ENCODE measurements at regions of chr6 and their contacts with region 1.

Region 1: GRCh38 chr6:50843842-50844241 is 25.2 kb downstream of the TFAP2B start:
- DNase-seq: no peak
- H3K4me3 Mint-ChIP-seq: no peak overlapping the region
- H3K27ac Mint-ChIP-seq: no peak overlapping the region
- H3K4me1 Mint-ChIP-seq: no peaks in the 10 kb centered on the region
- H3K27me3 Mint-ChIP-seq: peaks cover 80% of the 10 kb centered on the region

Region 2: GRCh38 chr6:49826743-49827406 is 1017.0 kb before region 1 on chr6:
- CTCF ChIA-PET with region 1: no interaction called
- intact Hi-C with region 1: no loop called
- DNase-seq: no peak
- H3K4me3 Mint-ChIP-seq: no peak overlapping the region
- H3K27ac Mint-ChIP-seq: no peak overlapping the region
- H3K4me1 Mint-ChIP-seq: no peaks in the 10 kb centered on the region
- H3K27me3 Mint-ChIP-seq: no peaks in the 10 kb centered on the region

Region 3: GRCh38 chr6:50390416-50390815 is 453.4 kb before region 1 on chr6:
- CTCF ChIA-PET with region 1: no interaction called
- intact Hi-C with region 1: no loop called
- DNase-seq: no peak
- H3K4me3 Mint-ChIP-seq: no peak overlapping the region
- H3K27ac Mint-ChIP-seq: no peak overlapping the region
- H3K4me1 Mint-ChIP-seq: no peaks in the 10 kb centered on the region
- H3K27me3 Mint-ChIP-seq: no peaks in the 10 kb centered on the region

Region 4: GRCh38 chr6:50714487-50715379 is 129.1 kb before region 1 on chr6:
- CTCF ChIA-PET with region 1: no interaction called
- intact Hi-C with region 1: loop called (anchors 5 kb)
- DNase-seq: no peak
- H3K4me3 Mint-ChIP-seq: no peak overlapping the region
- H3K27ac Mint-ChIP-seq: no peak overlapping the region
- H3K4me1 Mint-ChIP-seq: no peaks in the 10 kb centered on the region
- H3K27me3 Mint-ChIP-seq: peaks cover 63% of the 10 kb centered on the region

Region 5: GRCh38 chr6:50720623-50721022 is 123.2 kb before region 1 on chr6:
- CTCF ChIA-PET with region 1: no interaction called
- intact Hi-C with region 1: loop called (anchors 2 kb)
- DNase-seq: no peak
- H3K4me3 Mint-ChIP-seq: no peak overlapping the region
- H3K27ac Mint-ChIP-seq: no peak overlapping the region
- H3K4me1 Mint-ChIP-seq: no peaks in the 10 kb centered on the region
- H3K27me3 Mint-ChIP-seq: peaks cover 74% of the 10 kb centered on the region

Region 6: GRCh38 chr6:50889497-50889896 is 45.7 kb after region 1 on chr6:
- CTCF ChIA-PET with region 1: no interaction called
- intact Hi-C with region 1: no loop called
- DNase-seq: no peak
- H3K4me3 Mint-ChIP-seq: no peak overlapping the region
- H3K27ac Mint-ChIP-seq: no peak overlapping the region
- H3K4me1 Mint-ChIP-seq: no peaks in the 10 kb centered on the region
- H3K27me3 Mint-ChIP-seq: no peaks in the 10 kb centered on the region

Region 7: DNA sequence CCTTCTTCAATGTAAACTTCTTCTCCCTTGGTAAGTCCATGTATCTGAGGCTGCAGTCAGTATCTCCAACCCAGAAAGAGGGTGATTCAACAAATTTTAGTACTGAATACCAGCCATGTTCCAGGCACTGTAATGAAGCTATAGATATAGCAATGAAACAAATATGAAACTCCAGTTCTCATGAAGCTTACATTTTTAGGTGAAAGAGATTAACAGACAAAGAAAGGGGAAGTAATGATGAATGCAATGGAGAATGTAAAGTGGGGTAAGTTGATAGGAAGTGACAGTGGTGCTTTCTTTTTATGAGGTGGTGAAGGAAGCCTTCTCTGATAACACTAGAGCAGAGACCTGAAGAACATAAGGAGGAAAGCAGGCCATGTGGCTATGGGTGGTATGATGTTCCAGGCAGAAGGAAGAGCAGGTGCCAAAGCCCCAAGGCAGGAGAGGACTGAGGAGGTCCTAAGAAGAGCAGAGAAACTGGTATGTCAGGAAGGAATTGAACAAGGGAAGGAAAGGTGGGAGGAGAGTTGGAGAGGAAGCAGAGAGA is 118.4 kb after region 1 on chr6:
- CTCF ChIA-PET with region 1: no interaction called
- intact Hi-C with region 1: no loop called
- DNase-seq: no peak
- H3K4me3 Mint-ChIP-seq: no peak overlapping the region
- H3K27ac Mint-ChIP-seq: no peak overlapping the region
- H3K4me1 Mint-ChIP-seq: no peaks in the 10 kb centered on the region
- H3K27me3 Mint-ChIP-seq: no peaks in the 10 kb centered on the region